ENCODE measurements at regions of chr11 and their contacts with region 1.

Region 1: GRCh38 chr11:76444384-76445123 is at the start of gene EMSY:
- DNase-seq: peak; percentile 95
- H3K4me3 Mint-ChIP-seq: peak within 1 kb of the TSS; percentile 98
- H3K27ac Mint-ChIP-seq: peak within 1 kb of the TSS; percentile 91
- H3K4me1 Mint-ChIP-seq: peaks cover 33% of the 10 kb centered on the region
- H3K27me3 Mint-ChIP-seq: no peaks in the 10 kb centered on the region
- total RNA-seq, gene EMSY: 23.5 to 25.4 TPM

Region 2: GRCh38 chr11:76235233-76236091 is 209.1 kb before region 1 on chr11:
- CTCF ChIA-PET with region 1: no interaction called
- POLR2A ChIA-PET with region 1: no interaction called
- intact Hi-C with region 1: loop called (anchors 1 kb)
- DNase-seq: peak; percentile 96
- H3K4me3 Mint-ChIP-seq: peak overlapping the region; percentile 81
- H3K27ac Mint-ChIP-seq: peak overlapping the region; percentile 84
- H3K4me1 Mint-ChIP-seq: peaks cover 44% of the 10 kb centered on the region
- H3K27me3 Mint-ChIP-seq: no peaks in the 10 kb centered on the region

Region 3: DNA sequence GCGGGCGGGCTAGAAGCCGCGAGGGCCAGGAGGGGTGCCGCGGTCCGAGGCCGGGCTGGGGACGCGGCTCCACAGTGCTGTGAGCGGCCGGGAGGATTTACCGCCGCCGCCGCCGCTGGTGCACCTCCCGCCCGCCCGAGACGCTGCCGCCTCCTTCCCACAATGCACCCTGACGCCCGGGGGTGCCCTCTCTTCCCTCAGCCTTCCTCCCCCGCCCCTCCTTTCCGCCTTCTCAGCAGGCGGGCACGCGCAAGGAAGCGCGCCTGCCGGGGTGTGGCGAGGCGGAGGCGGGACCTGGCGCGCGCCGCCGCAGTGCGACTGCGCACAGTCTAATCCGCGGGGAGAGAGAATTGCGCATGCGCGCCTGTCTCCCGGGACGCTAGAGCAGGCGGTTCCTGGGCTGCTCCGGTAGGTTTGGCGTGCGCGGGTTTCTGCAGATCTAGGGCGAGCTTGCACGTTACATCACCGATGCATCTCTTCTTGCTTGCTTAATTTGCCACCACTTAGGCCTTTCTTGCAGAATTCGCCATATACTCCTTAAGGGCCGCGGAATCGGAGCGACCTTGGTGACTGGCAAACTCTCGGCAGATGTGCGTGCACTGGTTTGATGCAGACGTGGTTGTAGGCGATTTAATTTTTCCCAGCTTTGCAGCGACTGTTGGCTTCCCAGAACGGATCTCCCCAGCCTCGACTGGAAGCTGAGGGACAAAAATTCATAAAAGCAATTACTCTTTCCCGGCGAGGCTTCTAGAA is 63.4 kb before region 1 on chr11 and contains the starts of genes GVQW3 and THAP12:
- CTCF ChIA-PET with region 1: interaction called, 3 read pairs
- POLR2A ChIA-PET with region 1: interaction called, 5 read pairs
- intact Hi-C with region 1: loop called (anchors 1 kb)
- DNase-seq: peak; percentile 98
- H3K4me3 Mint-ChIP-seq: peak within 1 kb of the TSS; percentile 87
- H3K27ac Mint-ChIP-seq: peak within 1 kb of the TSS; percentile 89
- H3K4me1 Mint-ChIP-seq: peaks cover 57% of the 10 kb centered on the region
- H3K27me3 Mint-ChIP-seq: no peaks in the 10 kb centered on the region
- total RNA-seq, gene GVQW3: 2.3 to 3.3 TPM
- total RNA-seq, gene THAP12: 46.2 to 49.2 TPM

Region 4: DNA sequence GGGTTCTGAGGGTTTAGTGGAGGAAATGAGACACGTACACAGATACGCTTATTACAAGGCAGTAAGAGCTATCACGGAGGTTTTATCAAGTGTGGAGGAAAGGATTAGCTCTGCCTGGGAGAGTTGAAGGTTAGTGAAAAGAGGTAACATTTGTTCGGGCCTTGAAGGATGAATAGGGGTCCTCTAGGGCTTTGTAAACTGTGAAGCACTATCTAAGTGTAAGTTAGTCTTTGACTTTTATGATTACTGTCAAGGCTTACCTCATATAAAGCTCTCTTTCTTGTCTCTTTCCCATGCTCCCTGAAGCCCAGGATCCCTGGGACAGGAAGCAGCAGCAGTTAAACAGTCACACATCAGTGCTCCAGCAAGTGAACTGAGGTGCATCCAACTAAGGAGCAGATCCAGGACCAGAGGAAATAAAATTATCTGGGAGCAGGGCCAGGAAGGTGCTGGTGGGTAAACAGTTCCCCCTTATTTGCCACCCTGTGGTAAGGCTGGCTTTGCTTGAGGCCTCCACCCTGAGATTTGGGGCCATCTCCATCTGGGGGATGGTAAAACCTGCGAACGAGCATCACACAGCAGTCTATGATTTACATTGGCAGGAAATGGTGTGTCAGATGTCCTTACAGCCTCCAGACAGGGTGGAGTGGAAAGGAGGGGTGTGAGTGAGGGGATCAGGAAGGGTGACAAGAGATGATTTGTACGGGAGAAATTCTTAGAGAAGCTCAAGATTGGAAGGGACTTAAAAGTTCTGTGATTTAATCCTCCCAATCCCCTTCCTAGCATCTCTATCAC is 36.2 kb before region 1 on chr11:
- CTCF ChIA-PET with region 1: no interaction called
- POLR2A ChIA-PET with region 1: no interaction called
- intact Hi-C with region 1: no loop called
- DNase-seq: no peak
- H3K4me3 Mint-ChIP-seq: no peak overlapping the region
- H3K27ac Mint-ChIP-seq: no peak overlapping the region
- H3K4me1 Mint-ChIP-seq: no peaks in the 10 kb centered on the region
- H3K27me3 Mint-ChIP-seq: no peaks in the 10 kb centered on the region

Region 5: DNA sequence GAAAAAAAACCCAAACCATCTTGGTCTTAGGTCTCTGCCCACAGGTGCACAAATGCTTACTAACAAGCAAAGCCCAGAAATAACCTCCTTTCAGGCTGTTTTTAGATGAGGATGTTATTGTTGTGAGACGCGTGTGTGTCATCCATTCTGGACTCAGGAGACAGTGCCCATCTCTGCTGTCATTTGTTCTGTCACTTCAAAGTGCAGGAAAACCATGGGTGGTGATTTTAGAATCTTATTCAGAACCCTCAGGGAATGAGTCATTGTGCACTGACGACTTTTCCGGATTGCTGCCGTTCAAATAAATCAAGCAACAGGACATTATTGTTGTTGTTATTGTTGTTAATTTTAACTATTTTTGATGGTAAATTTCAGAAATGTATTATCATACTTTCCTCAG is 115.7 kb after region 1 on chr11:
- CTCF ChIA-PET with region 1: no interaction called
- POLR2A ChIA-PET with region 1: no interaction called
- intact Hi-C with region 1: loop called (anchors 2 kb)
- DNase-seq: peak; percentile 61
- H3K4me3 Mint-ChIP-seq: no peak overlapping the region
- H3K27ac Mint-ChIP-seq: peak overlapping the region; percentile 74
- H3K4me1 Mint-ChIP-seq: peaks cover 34% of the 10 kb centered on the region
- H3K27me3 Mint-ChIP-seq: peaks cover 16% of the 10 kb centered on the region

Measured in activated CD4-positive, alpha-beta memory T cell treated with anti-CD3 and anti-CD28 coated beads for 36 hours (primary cell).